IMR-90 (cell line): ENCODE measurements at regions of chr1 and their contacts with region 1.

Region 1: DNA sequence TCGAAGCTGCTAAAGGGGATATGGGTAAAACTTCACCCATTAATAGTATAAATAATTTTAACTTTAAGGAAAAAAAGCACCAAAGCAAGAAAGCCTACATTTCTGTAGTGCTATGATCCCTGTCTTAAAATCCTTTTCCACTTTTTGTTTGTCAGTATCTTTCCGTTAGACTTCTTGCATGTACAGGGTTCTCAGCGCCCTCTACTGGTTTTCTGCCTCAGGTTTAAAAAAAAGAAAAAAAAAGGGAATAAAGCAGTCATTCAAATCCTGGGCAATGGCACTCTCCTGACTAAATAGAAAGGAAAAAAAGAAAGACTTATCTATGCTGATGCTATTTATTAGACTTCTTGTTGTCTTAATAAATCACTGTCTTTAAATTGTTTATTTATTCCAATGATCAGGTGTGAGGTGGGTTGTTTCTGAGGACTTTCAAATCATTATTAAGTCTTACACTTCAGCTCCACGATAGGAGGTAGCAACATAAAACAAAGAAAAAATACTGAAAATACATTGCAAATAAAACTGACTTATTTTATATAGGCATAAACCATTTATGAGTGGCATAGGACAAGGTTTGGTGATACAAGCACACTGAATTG is 475.4 kb upstream of the NR5A2 start:
- DNase-seq: peak; percentile 76
- ATAC-seq: no peak
- H3K4me3 ChIP-seq: no peak overlapping the region
- H3K27ac ChIP-seq: no peak overlapping the region
- H3K4me1 ChIP-seq: peaks cover 7% of the 10 kb centered on the region
- H3K27me3 ChIP-seq: no peaks in the 10 kb centered on the region; the same call in 1 of the 2 replicates
- CTCF ChIP-seq: peak; percentile 85
- POLR2A ChIP-seq: no peak
- RAD21 ChIP-seq: peak; percentile 83

Region 2: DNA sequence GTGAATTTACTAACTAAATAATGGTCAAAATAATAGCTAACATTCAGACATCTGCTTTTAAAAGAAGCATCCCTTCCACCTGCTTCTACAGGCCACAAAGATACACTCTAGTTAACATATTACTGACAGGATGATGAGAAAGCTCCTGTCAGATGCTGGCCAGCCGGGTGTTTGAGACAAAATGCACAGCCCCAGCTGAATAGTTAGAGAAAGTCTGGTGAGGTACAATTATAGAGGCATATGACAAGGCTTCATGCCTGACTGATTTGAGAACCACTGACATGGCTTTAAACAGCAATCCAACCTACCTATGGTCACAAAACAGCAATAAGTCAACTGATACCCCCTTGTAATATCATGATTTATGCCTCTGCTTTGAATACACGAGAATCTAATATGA is 1913.8 kb before region 1 on chr1:
- CTCF ChIA-PET with region 1: no interaction called
- POLR2A ChIA-PET with region 1: no interaction called
- dilution Hi-C with region 1: no loop called
- in situ Hi-C with region 1: no loop called
- intact Hi-C with region 1: loop called (anchors 5 kb)
- DNase-seq: no peak
- ATAC-seq: no peak
- H3K4me3 ChIP-seq: no peak overlapping the region
- H3K27ac ChIP-seq: no peak overlapping the region
- H3K4me1 ChIP-seq: no peaks in the 10 kb centered on the region
- H3K27me3 ChIP-seq: no peaks in the 10 kb centered on the region
- CTCF ChIP-seq: no peak
- POLR2A ChIP-seq: no peak
- RAD21 ChIP-seq: no peak

Region 3: GRCh38 chr1:198756470-198756869 is 795.6 kb before region 1 on chr1:
- CTCF ChIA-PET with region 1: no interaction called
- POLR2A ChIA-PET with region 1: no interaction called
- dilution Hi-C with region 1: no loop called
- in situ Hi-C with region 1: loop called (anchors 5 kb)
- intact Hi-C with region 1: loop called (anchors 1 kb)
- DNase-seq: peak; percentile 36
- ATAC-seq: peak; percentile 72; the same call in 1 of the 2 replicates
- H3K4me3 ChIP-seq: no peak overlapping the region
- H3K27ac ChIP-seq: no peak overlapping the region
- H3K4me1 ChIP-seq: no peaks in the 10 kb centered on the region
- H3K27me3 ChIP-seq: no peaks in the 10 kb centered on the region
- CTCF ChIP-seq: peak; percentile 49
- POLR2A ChIP-seq: no peak
- RAD21 ChIP-seq: peak; percentile 44

Region 4: DNA sequence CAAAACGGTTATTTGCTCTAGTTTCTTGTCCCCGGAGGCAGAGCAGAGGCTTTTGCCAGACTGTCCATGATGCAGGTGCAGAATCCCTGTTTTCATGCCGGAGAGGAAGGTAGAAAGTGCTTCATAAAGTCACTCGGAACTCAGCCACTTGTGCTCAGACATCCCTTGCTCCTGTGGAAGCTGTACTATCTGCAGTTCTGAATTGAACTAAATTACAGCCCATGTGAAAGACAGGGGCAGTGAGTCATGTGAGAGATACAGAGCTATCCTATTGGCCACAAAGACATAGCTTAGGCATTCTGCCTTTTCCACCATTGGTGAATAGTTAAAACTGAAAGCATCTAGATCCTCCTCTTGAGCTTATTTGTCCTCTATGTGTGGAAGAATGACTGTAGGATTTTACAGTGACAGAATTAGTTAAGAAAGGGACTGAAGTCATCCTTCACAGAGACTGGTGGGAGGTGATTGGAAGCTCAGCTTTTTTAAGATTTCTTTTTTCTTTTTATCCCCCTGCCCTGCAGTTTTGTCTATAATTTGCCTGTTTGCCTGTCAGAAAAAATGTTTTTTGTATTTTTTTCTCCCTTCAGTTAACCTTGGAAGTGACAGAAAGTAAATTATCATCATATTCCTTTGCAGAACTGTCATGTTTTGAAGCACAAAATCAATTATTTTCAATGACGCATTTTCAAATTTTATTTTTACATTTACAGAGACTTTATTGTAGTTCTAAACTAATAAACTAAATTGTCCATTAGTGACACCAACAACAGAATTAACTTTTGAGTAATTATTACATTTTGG is 614.6 kb before region 1 on chr1:
- CTCF ChIA-PET with region 1: no interaction called
- POLR2A ChIA-PET with region 1: no interaction called
- dilution Hi-C with region 1: no loop called
- in situ Hi-C with region 1: no loop called
- intact Hi-C with region 1: loop called (anchors 1 kb)
- DNase-seq: peak; percentile 95
- ATAC-seq: peak; percentile 90
- H3K4me3 ChIP-seq: peak overlapping the region; percentile 89
- H3K27ac ChIP-seq: peak overlapping the region; percentile 92
- H3K4me1 ChIP-seq: no peaks in the 10 kb centered on the region; the same call in 1 of the 2 replicates
- H3K27me3 ChIP-seq: no peaks in the 10 kb centered on the region
- CTCF ChIP-seq: no peak
- POLR2A ChIP-seq: peak; percentile 95
- RAD21 ChIP-seq: 0 out of 2 replicates have a peak, but pooled peaks have one; percentile 18

Region 5: GRCh38 chr1:199313434-199313833 is 238.6 kb before region 1 on chr1:
- CTCF ChIA-PET with region 1: no interaction called
- POLR2A ChIA-PET with region 1: no interaction called
- dilution Hi-C with region 1: no loop called
- in situ Hi-C with region 1: no loop called
- intact Hi-C with region 1: loop called (anchors 10 kb)
- DNase-seq: no peak
- ATAC-seq: no peak
- H3K4me3 ChIP-seq: no peak overlapping the region
- H3K27ac ChIP-seq: no peak overlapping the region
- H3K4me1 ChIP-seq: no peaks in the 10 kb centered on the region
- H3K27me3 ChIP-seq: no peaks in the 10 kb centered on the region
- CTCF ChIP-seq: 0 out of 2 replicates have a peak, but pooled peaks have one; percentile 9
- POLR2A ChIP-seq: no peak
- RAD21 ChIP-seq: no peak

Region 6: GRCh38 chr1:200510228-200510623 is 958.2 kb after region 1 on chr1:
- CTCF ChIA-PET with region 1: no interaction called
- POLR2A ChIA-PET with region 1: no interaction called
- dilution Hi-C with region 1: no loop called
- in situ Hi-C with region 1: no loop called
- intact Hi-C with region 1: loop called (anchors 2 kb)
- DNase-seq: peak; percentile 88
- ATAC-seq: peak; percentile 90
- H3K4me3 ChIP-seq: no peak overlapping the region
- H3K27ac ChIP-seq: no peak overlapping the region
- H3K4me1 ChIP-seq: no peaks in the 10 kb centered on the region
- H3K27me3 ChIP-seq: no peaks in the 10 kb centered on the region
- CTCF ChIP-seq: peak; percentile 91
- POLR2A ChIP-seq: peak; percentile 56; the same call in 1 of the 2 replicates
- RAD21 ChIP-seq: peak; percentile 94